ENCODE measurements at regions of chr5 and their contacts with region 1.

Region 1: DNA sequence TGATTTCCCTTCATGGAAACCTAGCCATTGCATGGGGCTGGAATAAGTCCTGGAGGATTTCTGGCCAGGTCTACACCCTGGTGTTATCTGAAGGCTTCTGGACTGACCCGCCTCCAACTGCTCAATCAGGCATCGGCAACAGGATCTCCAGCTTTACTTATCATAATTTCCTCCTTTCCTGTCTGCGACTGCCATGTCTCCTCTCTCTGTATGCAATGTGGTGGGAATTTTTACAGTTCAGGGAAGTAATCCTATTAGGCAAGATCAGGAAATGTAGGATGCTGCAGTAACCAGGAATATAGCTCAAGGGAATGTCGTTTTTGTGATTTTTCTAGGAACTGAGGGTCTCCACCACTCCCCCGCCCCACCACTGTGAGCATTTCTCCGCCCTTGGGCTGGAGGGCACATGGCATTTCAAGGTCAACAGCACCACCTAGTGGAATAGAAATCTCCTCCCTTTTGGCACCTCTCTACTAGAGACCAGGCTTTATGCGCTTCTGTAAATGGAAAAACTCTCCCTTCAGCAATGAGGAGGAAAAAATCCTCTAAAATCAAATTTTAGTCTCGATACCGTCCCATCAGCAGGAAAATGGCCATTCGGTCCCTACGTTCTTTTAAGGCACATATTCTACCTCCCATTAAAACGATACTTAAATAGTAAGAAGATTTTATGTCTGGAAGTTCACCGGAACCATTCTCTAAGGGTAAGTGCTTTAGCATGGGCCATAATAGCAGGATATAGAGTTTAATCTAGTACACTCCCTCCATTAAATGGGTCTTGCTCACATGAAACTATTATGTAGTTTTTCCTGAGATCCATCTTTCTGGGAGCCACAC is 93.0 kb downstream of the YTHDC2 start:
- DNase-seq: peak in 3 of 6 donors; percentile 7 to 35 (median 34)
- ATAC-seq: peak; percentile 77 to 96 (median 94)
- H3K4me3 ChIP-seq: no peak overlapping the region
- H3K27ac ChIP-seq: no peak overlapping the region
- H3K4me1 ChIP-seq: no peaks in the 10 kb centered on the region
- H3K27me3 ChIP-seq: no peaks in the 10 kb centered on the region
- CTCF ChIP-seq: peak in 3 of 4 donors; percentile 59 to 70 (median 68)

Region 2: GRCh38 chr5:112983363-112983762 is 623.2 kb before region 1 on chr5:
- intact Hi-C with region 1: loop called in 1 of 3 experiments (anchors 10 kb)
- DNase-seq: no peak
- ATAC-seq: no peak
- H3K4me3 ChIP-seq: no peak overlapping the region
- H3K27ac ChIP-seq: no peak overlapping the region
- H3K4me1 ChIP-seq: peaks cover 0 to 13% (median 8%) of the 10 kb centered on the region in 3 donors
- H3K27me3 ChIP-seq: no peaks in the 10 kb centered on the region
- CTCF ChIP-seq: no peak

Region 3: DNA sequence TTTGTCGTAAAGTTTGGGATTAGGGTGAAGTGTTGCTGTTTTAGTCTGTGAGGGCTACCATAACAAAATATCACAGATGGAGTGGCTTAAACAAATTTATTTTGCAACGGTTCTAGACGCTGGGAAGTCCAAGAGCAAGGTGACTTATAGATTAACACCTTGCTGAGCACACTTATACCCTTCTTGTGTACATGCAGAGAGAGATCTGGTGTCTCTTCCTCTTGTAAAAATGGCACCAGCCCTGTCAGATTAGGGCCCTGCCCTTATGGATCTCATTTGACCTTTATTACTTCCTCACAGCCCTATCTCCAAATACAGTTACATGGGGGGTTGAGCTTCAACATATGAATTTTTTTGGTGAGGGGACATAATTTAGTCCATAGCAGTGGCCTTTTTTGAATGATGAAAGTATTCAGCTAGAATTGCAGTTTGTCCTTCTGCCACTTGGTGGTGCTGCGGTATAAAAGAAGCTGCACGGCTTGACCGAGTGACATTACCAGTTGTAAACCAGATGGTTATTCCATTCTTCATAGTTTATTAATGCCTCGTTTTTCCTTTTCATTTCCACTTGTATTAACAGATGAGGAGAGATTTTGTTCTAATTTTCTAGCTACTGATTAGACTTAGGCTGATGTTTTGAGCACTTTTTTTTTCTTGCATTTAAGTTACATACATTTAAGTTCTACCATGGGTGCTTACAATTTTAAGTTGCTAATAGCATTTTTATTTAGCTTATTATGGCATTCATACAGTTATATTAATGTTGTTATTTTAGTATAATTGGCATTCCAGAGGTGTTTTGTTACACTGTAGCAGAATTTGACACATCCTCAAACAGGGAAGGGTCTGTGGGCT is 610.5 kb before region 1 on chr5:
- intact Hi-C with region 1: loop called in 1 of 3 experiments (anchors 5 kb)
- DNase-seq: peak in 5 of 6 donors; percentile 35 to 77 (median 58)
- ATAC-seq: peak; percentile 76 to 96 (median 90)
- H3K4me3 ChIP-seq: no peak overlapping the region
- H3K27ac ChIP-seq: no peak overlapping the region
- H3K4me1 ChIP-seq: no peaks in the 10 kb centered on the region
- H3K27me3 ChIP-seq: no peaks in the 10 kb centered on the region
- CTCF ChIP-seq: peak; percentile 49 to 79 (median 71)

Region 4: DNA sequence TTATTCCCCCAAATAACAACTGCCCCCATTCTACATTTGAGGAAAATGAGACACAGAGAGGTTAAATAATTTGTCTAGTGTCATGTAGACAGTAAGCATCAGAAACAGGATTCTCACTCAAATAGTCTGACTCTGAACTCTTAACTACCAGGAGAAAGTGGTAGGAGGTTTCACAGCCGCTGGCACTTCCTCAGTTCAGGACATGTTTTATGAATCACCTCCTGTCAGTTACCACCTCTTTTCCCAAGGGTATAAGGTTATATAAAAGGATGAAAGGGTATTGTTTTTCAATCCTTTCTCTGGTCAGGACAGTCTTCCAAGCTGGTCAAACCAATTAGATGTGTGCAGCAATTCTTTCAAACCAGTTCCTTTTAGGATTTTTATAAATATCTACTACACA is 223.8 kb before region 1 on chr5:
- intact Hi-C with region 1: loop called in 1 of 3 experiments (anchors 10 kb)
- DNase-seq: no peak
- ATAC-seq: no peak
- H3K4me3 ChIP-seq: no peak overlapping the region
- H3K27ac ChIP-seq: no peak overlapping the region
- H3K4me1 ChIP-seq: peaks cover 0 to 5% (median 5%) of the 10 kb centered on the region in 3 donors
- H3K27me3 ChIP-seq: no peaks in the 10 kb centered on the region
- CTCF ChIP-seq: no peak

Region 5: GRCh38 chr5:113806250-113806649 is 199.7 kb after region 1 on chr5:
- intact Hi-C with region 1: no loop called
- DNase-seq: no peak
- ATAC-seq: peak in 2 of 4 donors; percentile 22 to 30
- H3K4me3 ChIP-seq: no peak overlapping the region
- H3K27ac ChIP-seq: no peak overlapping the region
- H3K4me1 ChIP-seq: no peaks in the 10 kb centered on the region
- H3K27me3 ChIP-seq: no peaks in the 10 kb centered on the region
- CTCF ChIP-seq: no peak

Measured in pancreas (tissue), 10 donors.